Activated T-helper 2 cell treated with anti-CD3 and anti-CD28 coated beads, Interferon-gamma antibody, Interleukin-2, Interleukin-4, amounts not matched to agents 10 μg/mL and 5 μg/mL and 100 μg/mL, durations not matched to agents 14 hours and 24 hours and 36 hours (primary cell): ENCODE measurements at regions of chr17 and their contacts with region 1.

Region 1: GRCh38 chr17:6651357-6651918 is at the starts of genes C17orf100 and MED31:
- DNase-seq: peak; percentile 94
- H3K4me3 Mint-ChIP-seq: peak within 1 kb of the TSS; percentile 96
- H3K27ac Mint-ChIP-seq: peak within 1 kb of the TSS; percentile 99
- H3K4me1 Mint-ChIP-seq: peaks cover 51% of the 10 kb centered on the region
- H3K27me3 Mint-ChIP-seq: peaks cover 25% of the 10 kb centered on the region
- total RNA-seq, gene C17orf100: 1.5 and 2.0 TPM in 2 replicates
- total RNA-seq, gene MED31: 19.1 and 24.2 TPM in 2 replicates

Region 2: DNA sequence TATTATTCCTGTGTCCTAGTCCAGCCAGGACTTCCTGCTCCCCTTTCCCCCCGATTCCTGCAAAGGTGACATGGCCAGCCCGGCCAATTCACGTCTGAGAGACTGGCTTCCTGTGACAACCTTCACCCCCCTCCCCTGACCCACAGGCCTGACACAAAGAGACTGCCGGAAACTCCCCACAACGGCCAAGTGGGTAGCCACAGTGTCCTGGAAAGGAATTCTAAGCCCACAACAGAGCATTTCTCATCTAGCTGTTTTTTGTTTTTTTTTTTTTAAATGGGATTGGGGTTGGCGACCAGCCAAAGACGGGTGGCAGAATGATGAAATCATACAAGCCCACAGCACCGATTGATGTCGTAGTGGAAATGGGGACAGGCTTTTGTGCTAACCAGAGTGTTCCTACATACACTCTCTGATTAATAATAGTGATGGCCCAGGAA is 101.6 kb after region 1 on chr17:
- intact Hi-C with region 1: loop called (anchors 10 kb)
- DNase-seq: no peak
- H3K4me3 Mint-ChIP-seq: no peak overlapping the region
- H3K27ac Mint-ChIP-seq: no peak overlapping the region
- H3K4me1 Mint-ChIP-seq: peaks cover 38% of the 10 kb centered on the region
- H3K27me3 Mint-ChIP-seq: peaks cover 11% of the 10 kb centered on the region

Region 3: DNA sequence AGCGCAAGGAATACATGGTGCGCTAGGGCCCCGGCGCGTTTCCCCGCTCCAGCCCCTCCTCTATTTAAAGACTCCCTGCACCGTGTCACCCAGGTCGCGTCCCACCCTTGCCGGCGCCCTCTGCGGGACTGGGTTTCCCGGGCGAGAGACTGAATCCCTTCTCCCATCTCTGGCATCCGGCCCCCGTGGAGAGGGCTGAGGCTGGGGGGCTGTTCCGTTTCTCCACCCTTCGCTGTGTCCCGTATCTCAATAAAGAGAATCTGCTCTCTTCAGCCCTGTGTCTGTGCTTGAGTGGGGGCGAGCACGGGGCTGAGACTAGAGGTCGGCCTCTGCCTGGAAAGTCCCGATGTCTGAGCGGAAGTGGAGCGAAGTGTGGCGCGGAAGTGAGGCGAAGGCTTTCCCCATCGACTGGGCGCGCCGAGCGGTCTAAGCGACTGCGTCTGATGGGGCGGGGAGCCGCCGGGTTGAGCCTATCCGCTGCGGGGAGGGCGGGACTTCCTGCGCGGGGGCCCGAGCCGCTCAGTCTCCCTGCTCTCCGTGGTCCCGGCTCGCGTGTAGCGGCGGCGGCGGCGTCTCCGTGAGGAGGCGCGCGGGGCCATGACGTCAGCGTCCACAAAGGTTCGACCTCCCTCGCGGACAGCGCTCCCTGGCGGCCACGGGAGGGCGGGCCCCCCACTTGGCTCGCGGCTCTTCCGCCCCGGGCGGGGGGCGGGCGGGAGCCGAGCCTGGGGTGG is 363.0 kb after region 1 on chr17:
- intact Hi-C with region 1: loop called (anchors 2 kb)
- DNase-seq: peak; percentile 98
- H3K4me3 Mint-ChIP-seq: peak overlapping the region; percentile 96
- H3K27ac Mint-ChIP-seq: peak overlapping the region; percentile 99
- H3K4me1 Mint-ChIP-seq: peaks cover 58% of the 10 kb centered on the region
- H3K27me3 Mint-ChIP-seq: no peaks in the 10 kb centered on the region

Region 4: GRCh38 chr17:8091033-8091687 is 1439.7 kb after region 1 on chr17:
- intact Hi-C with region 1: no loop called
- DNase-seq: no peak
- H3K4me3 Mint-ChIP-seq: no peak overlapping the region
- H3K27ac Mint-ChIP-seq: no peak overlapping the region
- H3K4me1 Mint-ChIP-seq: peaks cover 7% of the 10 kb centered on the region
- H3K27me3 Mint-ChIP-seq: peaks cover 23% of the 10 kb centered on the region